Left lung (tissue), 14 donors: ENCODE measurements at regions of chr6 and their contacts with region 1.

Region 1: GRCh38 chr6:73520688-73521350 is at the start of gene EEF1A1:
- DNase-seq: peak; percentile 99 to 100 (median 100)
- ATAC-seq: peak; percentile 88
- H3K4me3 ChIP-seq: peak within 1 kb of the TSS; percentile 78 to 96
- H3K27ac ChIP-seq: peak within 1 kb of the TSS; percentile 100
- H3K4me1 ChIP-seq: peaks cover 19 to 48% of the 10 kb centered on the region in 2 donors
- H3K27me3 ChIP-seq: no peaks in the 10 kb centered on the region
- CTCF ChIP-seq: peak in 1 of 2 donors; percentile 9
- polyA plus RNA-seq, gene EEF1A1: 23,165 to 26,911 (median 24,722) TPM

Region 2: DNA sequence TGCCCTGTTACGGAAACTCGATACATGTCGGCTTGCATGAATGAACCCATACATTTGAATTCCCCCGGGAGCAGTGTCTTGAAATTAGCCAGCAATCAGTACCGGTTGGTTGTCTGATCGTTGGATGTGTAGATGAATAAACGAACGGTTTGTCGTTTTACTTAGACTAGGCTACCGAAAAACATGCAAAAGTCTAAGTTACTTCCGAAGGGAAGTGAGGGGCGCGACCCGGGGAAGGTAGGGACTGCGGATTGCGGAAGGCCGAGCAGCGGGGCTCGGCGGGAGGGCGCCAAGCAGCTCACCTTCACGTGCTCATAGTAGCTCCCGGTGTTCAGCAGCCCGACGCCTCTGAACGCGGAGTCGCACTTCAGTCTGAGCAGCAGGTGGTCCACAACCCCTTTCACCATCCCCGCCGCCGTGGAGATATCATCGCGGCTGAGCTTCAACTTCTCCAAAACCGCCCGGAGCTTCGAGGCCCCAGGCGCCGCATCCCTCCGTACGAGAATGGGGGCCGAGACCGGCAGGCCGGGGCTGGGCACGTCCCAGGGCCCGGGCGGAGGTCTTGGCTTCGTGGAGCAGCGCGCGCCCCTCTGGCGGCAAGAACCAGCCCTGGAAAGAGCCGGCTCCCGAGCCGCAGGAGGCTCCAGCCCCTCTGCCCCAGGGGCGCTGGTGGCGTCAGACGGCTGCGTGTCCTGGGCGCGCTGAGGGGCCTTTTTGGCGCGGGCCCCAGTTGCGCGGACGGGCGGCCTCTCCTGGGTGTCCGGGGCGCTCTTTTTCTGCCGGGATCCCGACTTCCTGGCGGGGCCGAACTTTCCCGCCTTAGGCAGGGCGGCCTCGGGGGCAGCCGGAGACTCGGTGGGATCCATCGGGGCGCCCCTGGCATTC is 69.4 kb before region 1 on chr6:
- intact Hi-C with region 1: no loop called
- DNase-seq: peak; percentile 38 to 89 (median 61)
- ATAC-seq: peak; percentile 78
- H3K4me3 ChIP-seq: peak overlapping the region; percentile 70 to 90
- H3K27ac ChIP-seq: peak overlapping the region; percentile 87 to 94
- H3K4me1 ChIP-seq: peaks cover 5 to 78% of the 10 kb centered on the region in 2 donors
- H3K27me3 ChIP-seq: no peaks in the 10 kb centered on the region
- CTCF ChIP-seq: no peak

Region 3: DNA sequence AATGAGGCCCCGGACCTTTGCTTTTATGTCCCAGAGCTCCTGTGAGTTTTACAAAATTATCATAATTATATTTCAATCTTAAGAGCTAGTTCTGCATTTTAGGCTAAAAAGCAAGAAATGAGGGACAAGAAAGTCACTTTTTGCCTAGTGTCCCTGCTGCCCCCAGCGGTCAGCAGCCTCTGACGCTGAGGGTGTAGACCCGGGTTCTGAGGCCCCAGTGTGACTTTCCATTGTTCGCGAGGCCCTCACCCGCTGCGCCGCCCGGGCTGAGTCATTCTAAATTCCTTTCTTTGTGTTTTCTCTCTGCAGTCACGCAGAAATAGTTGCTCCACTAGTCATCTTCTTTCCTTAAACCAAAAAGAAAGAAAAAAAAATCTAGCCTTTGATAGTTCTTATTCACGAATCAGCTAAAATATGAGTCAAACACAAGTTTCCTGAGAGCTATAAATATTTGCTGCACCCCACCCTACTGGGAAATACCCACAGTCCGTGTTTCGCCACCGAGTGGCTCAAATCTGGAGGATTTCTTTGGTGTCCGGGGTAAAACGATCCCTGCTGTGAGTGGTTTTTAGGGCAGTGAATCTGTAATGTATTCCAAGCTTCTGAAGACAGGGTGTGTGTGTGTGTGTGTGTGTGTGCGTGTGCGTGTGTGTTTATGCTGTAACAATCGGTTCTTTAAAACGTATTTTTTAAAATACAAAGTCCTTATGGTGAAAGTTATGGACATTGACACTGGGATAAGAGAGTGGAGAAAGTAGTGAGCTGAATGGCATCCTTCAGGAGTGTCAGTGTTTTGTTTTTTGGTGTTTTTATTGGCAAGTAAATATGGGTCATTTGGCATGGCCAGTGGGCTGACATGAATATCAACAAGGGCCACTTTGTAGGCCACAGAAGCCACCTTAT is 59.7 kb after region 1 on chr6:
- intact Hi-C with region 1: loop called in 1 of 2 experiments (anchors 10 kb)
- DNase-seq: peak; percentile 64 to 91 (median 80)
- ATAC-seq: peak; percentile 92
- H3K4me3 ChIP-seq: no peak overlapping the region
- H3K27ac ChIP-seq: peak overlapping the region; percentile 87 to 97
- H3K4me1 ChIP-seq: peaks cover 14 to 45% of the 10 kb centered on the region in 2 donors
- H3K27me3 ChIP-seq: no peaks in the 10 kb centered on the region
- CTCF ChIP-seq: peak in 1 of 2 donors; percentile 49

Region 4: DNA sequence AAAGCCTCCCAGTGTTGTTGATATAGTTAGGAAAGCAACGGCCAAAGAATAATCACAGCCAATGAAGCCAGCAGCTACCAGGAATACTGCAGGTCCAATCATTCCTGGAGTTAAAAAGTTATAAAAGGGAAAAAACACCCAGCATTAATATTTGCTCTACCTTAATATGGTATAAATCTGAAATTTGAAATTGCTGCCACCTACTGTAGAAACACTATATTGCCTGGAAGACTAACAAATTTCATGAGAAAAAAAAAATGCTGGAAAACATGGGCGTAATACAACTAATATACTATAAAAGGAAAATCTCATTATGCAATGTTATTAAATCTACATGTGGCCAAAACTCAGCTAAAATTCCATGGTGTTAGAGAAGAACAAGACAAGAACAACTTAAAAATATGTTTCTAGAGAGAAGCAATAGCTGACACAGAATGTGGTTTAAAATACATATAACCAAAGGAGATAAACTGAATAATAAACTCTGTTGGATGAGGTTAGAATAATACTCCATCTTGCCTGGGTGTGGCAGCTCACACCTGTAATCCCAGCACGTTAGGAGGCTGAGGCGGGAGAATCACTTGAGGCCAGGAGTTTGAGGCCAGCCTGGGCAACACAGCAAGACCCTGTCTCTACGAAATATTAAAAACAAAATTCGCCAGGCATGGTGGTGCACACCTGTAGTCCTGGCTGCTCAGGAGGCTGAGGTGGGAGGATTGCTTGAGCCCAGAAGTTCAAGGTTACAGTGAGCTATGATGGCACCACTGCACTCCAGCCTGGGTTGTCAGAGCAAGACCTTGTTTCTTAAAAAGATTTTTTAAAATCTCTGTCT is 89.8 kb after region 1 on chr6:
- intact Hi-C with region 1: loop called in 1 of 2 experiments (anchors 10 kb)
- DNase-seq: peak in 2 of 4 donors; percentile 58 to 63
- ATAC-seq: peak; percentile 84
- H3K4me3 ChIP-seq: no peak overlapping the region
- H3K27ac ChIP-seq: no peak overlapping the region
- H3K4me1 ChIP-seq: peaks cover 0 to 4% of the 10 kb centered on the region in 2 donors
- H3K27me3 ChIP-seq: no peaks in the 10 kb centered on the region
- CTCF ChIP-seq: peak; percentile 41 to 58

Region 5: DNA sequence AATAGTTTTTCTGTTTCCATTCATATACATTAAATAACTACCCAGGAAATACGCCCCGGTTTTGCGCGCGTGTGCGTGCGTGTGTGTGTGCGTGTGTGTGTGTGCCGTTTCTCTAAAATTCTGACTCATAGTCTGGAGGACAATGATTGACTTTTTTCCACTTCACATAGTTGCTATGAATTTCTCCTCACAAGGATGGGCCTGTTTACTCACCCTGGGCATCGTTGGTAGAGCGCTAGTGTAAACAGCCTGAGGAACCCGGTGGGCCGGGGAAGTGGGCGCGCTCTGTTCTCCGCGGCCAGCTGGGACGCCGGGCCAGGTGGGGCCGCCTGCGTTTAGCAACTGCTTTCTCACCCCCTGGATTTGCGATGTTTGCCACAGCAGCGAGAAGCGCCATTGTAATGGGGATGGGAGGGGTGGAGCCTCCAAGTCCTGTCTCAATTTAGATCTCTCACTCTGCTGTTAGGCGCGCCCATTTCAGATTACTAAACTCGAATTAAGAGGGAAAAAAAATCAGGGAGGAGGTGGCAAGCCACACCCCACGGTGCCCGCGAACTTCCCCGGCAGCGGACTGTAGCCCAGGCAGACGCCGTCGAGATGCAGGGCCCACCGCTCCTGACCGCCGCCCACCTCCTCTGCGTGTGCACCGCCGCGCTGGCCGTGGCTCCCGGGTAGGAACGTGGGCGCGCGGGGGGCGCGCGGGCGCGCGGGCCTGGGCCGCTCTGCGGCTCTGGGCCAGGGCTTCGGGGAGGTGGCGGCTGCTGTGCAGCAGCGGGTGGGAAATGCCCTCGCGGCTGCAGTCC is 175.0 kb after region 1 on chr6 and contains the start of gene CD109:
- intact Hi-C with region 1: no loop called
- DNase-seq: peak; percentile 47 to 82 (median 68)
- ATAC-seq: peak; percentile 81
- H3K4me3 ChIP-seq: peak within 1 kb of the TSS; percentile 42 to 55
- H3K27ac ChIP-seq: peak within 1 kb of the TSS; percentile 78 to 85
- H3K4me1 ChIP-seq: peaks cover 5 to 29% of the 10 kb centered on the region in 2 donors
- H3K27me3 ChIP-seq: peaks cover 0 to 27% of the 10 kb centered on the region in 2 donors
- CTCF ChIP-seq: no peak
- polyA plus RNA-seq, gene CD109: 19.4 to 27.8 (median 21.4) TPM